Activated T-helper 1 cell treated with anti-CD3 and anti-CD28 coated beads, Interleukin-12 subunit alpha, Interleukin-12 subunit beta, Interleukin-2, Interleukin-4 antibody, amounts not matched to agents 30 ng/mL and 10 ng/mL and 1 ng/mL, durations not matched to agents 14 hours and 24 hours and 36 hours (primary cell): ENCODE measurements at regions of chr7 and their contacts with region 1.

Region 1: GRCh38 chr7:148503875-148504487 is 86.6 kb upstream of the C7orf33 start:
- DNase-seq: no peak
- H3K4me3 Mint-ChIP-seq: no peak overlapping the region
- H3K27ac Mint-ChIP-seq: no peak overlapping the region
- H3K4me1 Mint-ChIP-seq: peaks cover 7% of the 10 kb centered on the region
- H3K27me3 Mint-ChIP-seq: peaks cover 17% of the 10 kb centered on the region

Region 2: DNA sequence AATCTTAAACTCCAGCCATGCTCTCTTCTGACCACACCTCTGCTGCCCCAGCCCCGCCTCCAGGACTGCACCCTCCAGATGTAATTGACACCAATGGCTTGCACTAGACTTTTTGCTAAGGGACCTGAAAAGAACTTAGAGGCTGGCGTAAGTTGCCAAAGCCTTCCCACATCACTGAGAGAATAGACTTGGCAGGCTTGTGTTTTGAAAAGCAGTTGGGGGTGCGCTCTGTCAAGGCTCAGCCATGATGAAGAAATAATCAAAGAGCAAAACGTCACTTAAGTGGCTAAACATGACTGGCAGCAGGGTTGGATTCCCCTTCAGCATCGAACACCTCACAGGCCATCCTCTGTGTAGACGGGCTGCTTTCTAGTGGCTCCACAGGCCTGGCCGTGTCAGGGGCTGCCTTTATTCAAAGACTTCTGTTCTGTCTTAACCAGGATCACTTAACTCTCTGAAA is 108.6 kb before region 1 on chr7:
- intact Hi-C with region 1: no loop called
- DNase-seq: no peak
- H3K4me3 Mint-ChIP-seq: no peak overlapping the region
- H3K27ac Mint-ChIP-seq: no peak overlapping the region
- H3K4me1 Mint-ChIP-seq: no peaks in the 10 kb centered on the region
- H3K27me3 Mint-ChIP-seq: peaks cover 17% of the 10 kb centered on the region

Region 3: GRCh38 chr7:148575640-148576411 is 71.8 kb after region 1 on chr7:
- intact Hi-C with region 1: loop called (anchors 1 kb)
- DNase-seq: peak; percentile 47
- H3K4me3 Mint-ChIP-seq: no peak overlapping the region
- H3K27ac Mint-ChIP-seq: no peak overlapping the region
- H3K4me1 Mint-ChIP-seq: peaks cover 24% of the 10 kb centered on the region
- H3K27me3 Mint-ChIP-seq: peaks cover 3% of the 10 kb centered on the region

Region 4: GRCh38 chr7:148773334-148773733 is 269.4 kb after region 1 on chr7:
- intact Hi-C with region 1: loop called (anchors 10 kb)
- DNase-seq: peak; percentile 35
- H3K4me3 Mint-ChIP-seq: no peak overlapping the region
- H3K27ac Mint-ChIP-seq: peak overlapping the region; percentile 54
- H3K4me1 Mint-ChIP-seq: peaks cover 30% of the 10 kb centered on the region
- H3K27me3 Mint-ChIP-seq: no peaks in the 10 kb centered on the region

Region 5: GRCh38 chr7:148914208-148914777 is 410.3 kb after region 1 on chr7:
- intact Hi-C with region 1: loop called (anchors 1 kb)
- DNase-seq: peak; percentile 34
- H3K4me3 Mint-ChIP-seq: peak overlapping the region; percentile 77
- H3K27ac Mint-ChIP-seq: peak overlapping the region; percentile 94
- H3K4me1 Mint-ChIP-seq: peaks cover 63% of the 10 kb centered on the region
- H3K27me3 Mint-ChIP-seq: peaks cover 2% of the 10 kb centered on the region